CD8-positive, alpha-beta T cell (primary cell): ENCODE measurements at regions of chr12 and their contacts with region 1.

Region 1: GRCh38 chr12:53727310-53728041 is at the start of gene CALCOCO1:
- DNase-seq: peak; percentile 95 to 99 (median 97)
- ATAC-seq: peak; percentile 98
- H3K4me3 ChIP-seq: peak within 1 kb of the TSS; percentile 67 to 76
- H3K4me3 Mint-ChIP-seq: peak within 1 kb of the TSS; percentile 95
- H3K27ac ChIP-seq: peak within 1 kb of the TSS; percentile 65 to 72
- H3K27ac Mint-ChIP-seq: peak within 1 kb of the TSS; percentile 92
- H3K4me1 ChIP-seq: peaks cover 18% of the 10 kb centered on the region
- H3K4me1 Mint-ChIP-seq: peaks cover 30% of the 10 kb centered on the region
- H3K27me3 ChIP-seq: no peaks in the 10 kb centered on the region
- H3K27me3 Mint-ChIP-seq: no peaks in the 10 kb centered on the region
- CTCF ChIP-seq: no peak
- total RNA-seq, gene CALCOCO1: 49.2 to 49.5 TPM

Region 2: GRCh38 chr12:53476769-53477209 is 250.7 kb before region 1 on chr12:
- CTCF ChIA-PET with region 1: no interaction called
- POLR2A ChIA-PET with region 1: no interaction called
- intact Hi-C with region 1: no loop called
- DNase-seq: peak in 2 of 9 experiments; percentile 19 to 37
- ATAC-seq: peak; percentile 37
- H3K4me3 ChIP-seq: no peak overlapping the region
- H3K4me3 Mint-ChIP-seq: no peak overlapping the region
- H3K27ac ChIP-seq: no peak overlapping the region
- H3K27ac Mint-ChIP-seq: no peak overlapping the region
- H3K4me1 ChIP-seq: peaks cover 25% of the 10 kb centered on the region
- H3K4me1 Mint-ChIP-seq: peaks cover 52% of the 10 kb centered on the region
- H3K27me3 ChIP-seq: no peaks in the 10 kb centered on the region
- H3K27me3 Mint-ChIP-seq: no peaks in the 10 kb centered on the region
- CTCF ChIP-seq: no peak

Region 3: GRCh38 chr12:53625946-53626701 is 101.4 kb before region 1 on chr12 and contains the start of gene ATF7:
- CTCF ChIA-PET with region 1: no interaction called
- POLR2A ChIA-PET with region 1: no interaction called
- intact Hi-C with region 1: loop called (anchors 1 kb)
- DNase-seq: peak; percentile 96 to 100 (median 98)
- ATAC-seq: peak; percentile 92
- H3K4me3 ChIP-seq: peak within 1 kb of the TSS; percentile 65 to 90
- H3K4me3 Mint-ChIP-seq: peak within 1 kb of the TSS; percentile 93
- H3K27ac ChIP-seq: peak within 1 kb of the TSS; percentile 84 to 85
- H3K27ac Mint-ChIP-seq: peak within 1 kb of the TSS; percentile 98
- H3K4me1 ChIP-seq: peaks cover 30% of the 10 kb centered on the region
- H3K4me1 Mint-ChIP-seq: peaks cover 46% of the 10 kb centered on the region
- H3K27me3 ChIP-seq: no peaks in the 10 kb centered on the region
- H3K27me3 Mint-ChIP-seq: no peaks in the 10 kb centered on the region
- CTCF ChIP-seq: no peak
- total RNA-seq, gene ATF7: 9.1 to 13.2 TPM

Region 4: DNA sequence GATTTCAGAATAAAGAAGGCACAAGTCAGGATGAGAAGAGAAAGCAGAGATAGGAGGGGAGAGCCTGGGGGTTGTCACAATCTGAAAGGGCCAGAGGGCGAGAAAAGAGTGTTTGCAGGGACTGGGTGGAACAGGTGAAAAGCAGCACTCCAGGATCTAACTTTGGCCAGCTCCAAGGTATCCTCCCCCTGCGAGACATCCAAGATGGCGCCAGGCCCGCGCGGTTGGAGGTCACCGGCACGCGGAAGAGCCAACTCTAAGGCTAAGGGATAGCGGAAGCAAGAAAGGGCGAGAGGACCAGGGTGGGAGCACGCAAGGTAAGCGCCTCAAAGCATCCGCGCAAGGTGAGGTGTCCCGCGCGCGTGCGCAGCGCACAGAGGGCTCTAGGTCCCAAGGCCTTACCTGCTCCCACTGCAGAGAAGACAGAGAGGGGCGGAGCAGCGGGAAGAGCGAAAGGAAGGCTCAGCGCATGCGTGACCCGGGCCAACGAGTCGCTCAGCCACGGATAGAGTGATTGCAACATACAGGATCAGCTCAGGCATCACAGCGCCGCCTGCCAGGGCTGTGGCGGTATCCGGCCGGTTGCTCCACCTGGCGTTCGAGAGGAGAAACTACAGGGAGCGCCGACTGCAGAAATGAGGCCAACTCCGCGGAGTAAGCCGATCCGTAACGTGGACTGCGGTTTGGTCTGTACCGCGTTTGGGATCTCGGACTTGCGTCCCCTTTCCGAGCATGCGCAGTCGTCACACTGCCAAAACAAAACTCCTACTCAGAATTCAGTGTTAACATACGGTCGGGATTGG is 51.6 kb before region 1 on chr12 and contains the start of gene ATP5MC2:
- CTCF ChIA-PET with region 1: interaction called, 3 read pairs
- POLR2A ChIA-PET with region 1: no interaction called
- intact Hi-C with region 1: loop called (anchors 1 kb)
- DNase-seq: peak; percentile 96 to 99 (median 97)
- ATAC-seq: peak; percentile 90
- H3K4me3 ChIP-seq: peak within 1 kb of the TSS; percentile 67 to 92
- H3K4me3 Mint-ChIP-seq: peak within 1 kb of the TSS; percentile 92
- H3K27ac ChIP-seq: peak within 1 kb of the TSS; percentile 60 to 84
- H3K27ac Mint-ChIP-seq: peak within 1 kb of the TSS; percentile 95
- H3K4me1 ChIP-seq: peaks cover 14% of the 10 kb centered on the region
- H3K4me1 Mint-ChIP-seq: peaks cover 36% of the 10 kb centered on the region
- H3K27me3 ChIP-seq: peaks cover 0 to 16% of the 10 kb centered on the region in 2 experiments
- H3K27me3 Mint-ChIP-seq: peaks cover 16% of the 10 kb centered on the region
- CTCF ChIP-seq: peak; percentile 99
- total RNA-seq, gene ATP5MC2: 220 to 229 TPM

Region 5: DNA sequence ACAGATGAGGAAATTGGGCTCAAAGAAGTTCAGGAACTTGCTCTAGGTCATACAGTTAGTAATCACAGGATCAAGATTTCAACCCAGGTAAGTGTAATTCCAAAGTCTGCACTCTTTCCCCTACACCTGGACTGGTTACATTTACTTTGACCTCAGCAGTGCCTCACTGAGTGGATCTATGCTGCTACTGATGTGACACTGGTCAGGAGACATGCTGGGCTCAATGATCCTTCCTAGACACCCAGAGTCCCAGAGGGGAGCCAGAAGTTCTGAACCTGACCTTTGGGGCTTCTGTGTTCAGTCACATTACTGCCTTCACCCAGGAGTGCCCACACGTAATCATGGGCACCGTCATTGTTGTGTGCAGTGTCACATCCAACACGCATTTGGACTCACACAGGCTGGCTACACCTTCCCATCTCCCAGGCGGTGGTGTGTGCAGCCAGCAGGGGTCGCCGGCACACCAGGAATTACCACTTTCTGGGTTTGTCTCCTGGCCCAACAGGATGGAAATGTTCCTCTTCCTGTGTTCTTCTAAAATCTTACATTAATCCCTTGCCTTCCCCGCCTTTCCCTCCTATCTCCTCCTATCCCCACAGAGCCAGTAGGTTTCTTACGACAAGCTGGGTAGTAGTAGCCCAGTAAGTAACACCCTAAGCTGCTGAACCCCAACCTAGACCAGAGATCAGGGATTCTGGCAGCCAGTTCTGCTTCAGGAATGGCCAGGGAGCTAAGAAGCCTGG is 25.8 kb before region 1 on chr12:
- CTCF ChIA-PET with region 1: interaction called, 42 read pairs
- POLR2A ChIA-PET with region 1: interaction called, 3 read pairs
- intact Hi-C with region 1: no loop called
- DNase-seq: peak; percentile 52 to 86 (median 77)
- ATAC-seq: peak; percentile 92
- H3K4me3 ChIP-seq: no peak overlapping the region
- H3K4me3 Mint-ChIP-seq: no peak overlapping the region
- H3K27ac ChIP-seq: no peak overlapping the region
- H3K27ac Mint-ChIP-seq: no peak overlapping the region
- H3K4me1 ChIP-seq: peaks cover 3% of the 10 kb centered on the region
- H3K4me1 Mint-ChIP-seq: peaks cover 5% of the 10 kb centered on the region
- H3K27me3 ChIP-seq: peaks cover 19 to 24% of the 10 kb centered on the region in 2 experiments
- H3K27me3 Mint-ChIP-seq: peaks cover 77% of the 10 kb centered on the region
- CTCF ChIP-seq: peak; percentile 83

Region 6: DNA sequence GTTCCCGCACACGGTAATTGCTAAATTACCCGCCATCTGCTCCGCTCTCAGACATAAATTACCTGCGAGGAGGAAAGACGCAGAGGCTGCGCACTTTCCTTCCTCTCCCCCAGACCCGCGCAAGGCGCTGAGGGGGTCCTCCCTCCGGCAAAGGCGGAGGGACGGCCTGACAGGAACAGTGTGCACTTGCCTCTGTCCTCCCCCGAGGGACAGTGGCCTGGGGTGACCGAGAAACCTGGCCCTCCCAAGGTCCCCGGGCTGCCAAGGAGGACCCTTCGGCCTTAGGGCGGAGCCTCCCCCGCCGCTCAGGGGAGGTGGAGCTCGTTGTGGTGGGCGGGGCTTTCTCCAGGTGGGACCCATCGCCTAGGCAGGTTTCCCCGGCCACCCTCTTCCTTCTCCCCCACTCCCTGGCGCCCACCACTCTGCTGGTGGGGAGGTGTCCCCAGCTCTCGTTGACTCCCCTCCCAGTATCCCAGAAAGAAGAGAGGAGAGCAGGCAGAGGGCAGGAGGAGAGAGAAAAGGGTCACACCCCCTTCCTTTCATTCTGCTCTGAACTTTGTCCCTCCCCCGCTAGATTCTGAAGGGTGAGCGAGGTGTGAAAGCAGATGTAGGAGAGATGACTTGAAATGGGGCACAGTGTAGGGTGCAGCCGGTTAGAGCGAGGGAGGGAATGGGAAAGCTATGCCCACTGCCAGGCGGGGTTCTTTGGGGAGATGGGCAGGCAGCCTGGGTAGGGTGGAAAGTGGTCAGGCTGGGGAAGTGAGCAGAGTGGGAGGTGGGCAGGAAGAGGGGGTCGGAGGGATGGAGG is 11.1 kb after region 1 on chr12:
- CTCF ChIA-PET with region 1: interaction called, 265 read pairs
- POLR2A ChIA-PET with region 1: interaction called, 14 read pairs
- intact Hi-C with region 1: loop called (anchors 1 to 2 kb)
- DNase-seq: peak in 8 of 9 experiments; percentile 30 to 63 (median 52)
- ATAC-seq: peak; percentile 72
- H3K4me3 ChIP-seq: peak overlapping the region; percentile 42 to 59
- H3K4me3 Mint-ChIP-seq: peak overlapping the region; percentile 56
- H3K27ac ChIP-seq: no peak overlapping the region
- H3K27ac Mint-ChIP-seq: no peak overlapping the region
- H3K4me1 ChIP-seq: peaks cover 30% of the 10 kb centered on the region
- H3K4me1 Mint-ChIP-seq: peaks cover 22% of the 10 kb centered on the region
- H3K27me3 ChIP-seq: peaks cover 17 to 44% of the 10 kb centered on the region in 2 experiments
- H3K27me3 Mint-ChIP-seq: peaks cover 52% of the 10 kb centered on the region
- CTCF ChIP-seq: no peak